Dendritic cell treated with granulocyte-macrophage colony-stimulating factor and Interleukin-4, amounts not matched to agents 40 ng/mL and 50 ng/mL, for 4 days (primary cell): ENCODE measurements at regions of chr14 and their contacts with region 1.

Region 1: GRCh38 chr14:34582117-34582680 is 42.7 kb upstream of the EAPP start:
- H3K4me3 Mint-ChIP-seq: no peak overlapping the region
- H3K27ac Mint-ChIP-seq: no peak overlapping the region
- H3K4me1 Mint-ChIP-seq: no peaks in the 10 kb centered on the region
- H3K27me3 Mint-ChIP-seq: no peaks in the 10 kb centered on the region

Region 2: DNA sequence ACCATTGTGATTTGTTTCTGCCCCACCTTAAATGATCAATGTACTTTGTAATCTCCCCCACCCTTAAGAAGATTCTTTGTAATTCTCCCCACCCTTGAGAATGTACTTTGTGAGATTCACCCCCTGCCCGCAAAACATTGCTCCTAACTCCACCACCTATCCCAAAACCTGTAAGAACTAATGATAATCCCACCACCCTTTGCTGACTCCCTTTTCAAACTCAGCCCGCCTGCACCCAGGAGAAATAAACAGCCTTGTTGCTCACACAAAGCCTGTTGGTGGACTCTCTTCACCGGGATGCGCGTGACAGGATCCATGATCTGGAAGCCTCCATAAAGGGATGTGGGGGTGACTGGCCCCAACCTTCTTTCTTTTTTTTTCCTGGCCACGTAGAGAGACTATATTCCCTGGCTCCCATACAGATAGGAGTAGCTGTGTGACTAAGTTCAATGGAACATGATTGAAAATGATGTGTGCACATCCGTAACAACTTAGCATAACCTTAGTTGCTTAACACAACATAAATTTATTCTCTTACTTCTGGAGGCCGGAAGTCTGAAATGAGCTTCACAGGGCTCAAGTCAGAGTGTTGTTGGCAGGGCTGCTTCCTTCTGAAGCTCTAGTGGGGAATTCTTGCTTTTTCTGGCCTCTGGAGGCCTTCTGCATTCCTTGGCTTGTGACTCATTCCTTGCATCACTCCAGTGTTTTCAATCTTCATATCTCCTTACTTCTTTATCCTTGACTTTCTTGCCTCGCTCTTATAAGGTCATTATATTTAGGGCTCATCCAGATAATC is 68.4 kb after region 1 on chr14:
- intact Hi-C with region 1: no loop called
- H3K4me3 Mint-ChIP-seq: no peak overlapping the region
- H3K27ac Mint-ChIP-seq: peak overlapping the region; percentile 35
- H3K4me1 Mint-ChIP-seq: peaks cover 16% of the 10 kb centered on the region
- H3K27me3 Mint-ChIP-seq: no peaks in the 10 kb centered on the region

Region 3: DNA sequence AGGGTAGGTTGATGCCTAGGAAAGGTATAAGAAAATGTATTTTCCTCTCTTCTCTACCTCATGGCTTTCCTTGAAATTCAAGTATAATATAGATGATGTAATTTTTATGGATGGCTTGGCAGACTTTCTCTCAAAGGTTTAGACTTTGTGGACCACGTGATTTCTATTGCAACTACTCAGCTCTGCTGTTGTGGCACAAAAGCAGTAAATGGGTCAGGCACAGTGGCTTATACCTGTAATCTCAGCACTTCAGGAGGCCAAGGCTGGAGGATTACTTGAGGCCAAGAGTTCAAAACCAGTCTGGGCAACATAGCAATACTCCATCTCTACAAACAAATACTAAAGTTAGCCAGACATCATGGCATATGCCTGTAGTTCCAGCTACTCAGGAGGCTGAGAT is 422.6 kb after region 1 on chr14:
- intact Hi-C with region 1: loop called (anchors 5 kb)
- H3K4me3 Mint-ChIP-seq: no peak overlapping the region
- H3K27ac Mint-ChIP-seq: no peak overlapping the region
- H3K4me1 Mint-ChIP-seq: no peaks in the 10 kb centered on the region
- H3K27me3 Mint-ChIP-seq: no peaks in the 10 kb centered on the region

Region 4: GRCh38 chr14:35088514-35088913 is 506.3 kb after region 1 on chr14:
- intact Hi-C with region 1: loop called (anchors 10 kb)
- H3K4me3 Mint-ChIP-seq: no peak overlapping the region
- H3K27ac Mint-ChIP-seq: no peak overlapping the region
- H3K4me1 Mint-ChIP-seq: no peaks in the 10 kb centered on the region
- H3K27me3 Mint-ChIP-seq: no peaks in the 10 kb centered on the region